ENCODE measurements at regions of chr22 and their contacts with region 1.

Region 1: GRCh38 chr22:26511857-26512793 is at the start of gene TFIP11:
- DNase-seq: peak; percentile 91
- H3K4me3 Mint-ChIP-seq: peak within 1 kb of the TSS; percentile 100
- H3K27ac Mint-ChIP-seq: peak within 1 kb of the TSS; percentile 96
- H3K4me1 Mint-ChIP-seq: peaks cover 50% of the 10 kb centered on the region
- H3K27me3 Mint-ChIP-seq: no peaks in the 10 kb centered on the region
- total RNA-seq, gene TFIP11: 57.2 and 58.1 TPM in 2 replicates

Region 2: GRCh38 chr22:26330966-26331625 is 181.0 kb before region 1 on chr22:
- intact Hi-C with region 1: no loop called
- DNase-seq: peak; percentile 44
- H3K4me3 Mint-ChIP-seq: no peak overlapping the region
- H3K27ac Mint-ChIP-seq: no peak overlapping the region
- H3K4me1 Mint-ChIP-seq: peaks cover 5% of the 10 kb centered on the region
- H3K27me3 Mint-ChIP-seq: peaks cover 16% of the 10 kb centered on the region

Region 3: DNA sequence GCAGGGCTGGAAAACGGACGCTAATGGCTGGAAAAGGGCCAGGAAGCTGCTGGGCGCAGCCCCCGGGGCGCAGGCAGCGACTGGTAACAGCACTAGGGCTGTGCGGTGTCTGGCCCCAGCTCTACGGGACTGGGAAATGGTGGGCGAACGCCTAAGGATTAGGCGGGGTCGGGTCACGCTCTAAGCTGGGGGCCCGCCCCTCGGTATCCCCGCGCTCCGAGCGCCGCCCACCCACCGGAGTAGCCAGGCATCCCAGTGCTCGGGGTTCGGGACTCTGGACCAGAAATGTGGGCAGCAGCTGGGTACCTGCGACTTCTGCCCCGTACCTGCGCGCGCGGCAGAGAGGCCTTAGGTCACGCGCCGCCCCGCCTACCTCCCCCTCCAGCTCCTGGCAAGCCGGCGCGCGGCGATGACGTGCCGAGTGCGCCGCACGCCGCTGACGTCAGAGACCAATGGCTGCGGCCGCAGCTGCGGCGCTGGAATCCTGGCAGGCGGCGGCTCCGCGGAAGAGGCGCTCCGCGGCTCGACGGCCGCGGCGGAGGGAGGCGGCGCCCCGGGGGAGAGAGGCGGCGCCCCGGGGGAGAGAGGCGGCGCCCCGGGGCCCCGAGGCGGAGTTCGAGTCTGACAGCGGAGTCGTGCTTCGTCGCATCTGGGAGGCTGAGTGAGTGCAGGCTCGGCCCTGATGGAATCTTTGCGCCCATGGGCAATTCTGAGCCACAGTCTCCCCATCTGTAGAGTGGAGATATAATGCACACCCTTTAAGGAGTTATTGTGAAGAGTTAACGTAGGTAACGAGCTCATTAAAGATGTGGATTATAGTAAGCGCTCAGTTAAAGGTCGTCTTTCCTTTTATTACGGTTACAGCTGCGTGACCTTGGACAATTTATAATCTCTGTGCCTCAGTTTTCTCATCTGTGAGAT is 28.4 kb before region 1 on chr22 and contains the starts of genes HPS4 and SRRD:
- intact Hi-C with region 1: loop called (anchors 1 kb)
- DNase-seq: peak; percentile 93
- H3K4me3 Mint-ChIP-seq: peak within 1 kb of the TSS; percentile 95
- H3K27ac Mint-ChIP-seq: peak within 1 kb of the TSS; percentile 94
- H3K4me1 Mint-ChIP-seq: peaks cover 70% of the 10 kb centered on the region
- H3K27me3 Mint-ChIP-seq: no peaks in the 10 kb centered on the region
- total RNA-seq, gene HPS4: 43.8 and 44.5 TPM in 2 replicates
- total RNA-seq, gene SRRD: 29.2 and 34.8 TPM in 2 replicates

Region 4: GRCh38 chr22:26547426-26547825 is 35.3 kb after region 1 on chr22:
- intact Hi-C with region 1: loop called (anchors 1 kb)
- DNase-seq: peak; percentile 14
- H3K4me3 Mint-ChIP-seq: no peak overlapping the region
- H3K27ac Mint-ChIP-seq: peak overlapping the region; percentile 72
- H3K4me1 Mint-ChIP-seq: peaks cover 56% of the 10 kb centered on the region
- H3K27me3 Mint-ChIP-seq: no peaks in the 10 kb centered on the region

Region 5: GRCh38 chr22:26665813-26666231 is 153.7 kb after region 1 on chr22:
- intact Hi-C with region 1: loop called (anchors 2 kb)
- DNase-seq: no peak
- H3K4me3 Mint-ChIP-seq: peak overlapping the region; percentile 75
- H3K27ac Mint-ChIP-seq: peak overlapping the region; percentile 96
- H3K4me1 Mint-ChIP-seq: peaks cover 76% of the 10 kb centered on the region
- H3K27me3 Mint-ChIP-seq: no peaks in the 10 kb centered on the region

Measured in activated T-helper 1 cell treated with anti-CD3 and anti-CD28 coated beads, Interleukin-12 subunit alpha, Interleukin-12 subunit beta, Interleukin-2, Interleukin-4 antibody, amounts not matched to agents 30 ng/mL and 10 ng/mL and 1 ng/mL, durations not matched to agents 14 hours and 24 hours and 36 hours (primary cell).